ENCODE measurements at regions of chr13 and their contacts with region 1.

Region 1: DNA sequence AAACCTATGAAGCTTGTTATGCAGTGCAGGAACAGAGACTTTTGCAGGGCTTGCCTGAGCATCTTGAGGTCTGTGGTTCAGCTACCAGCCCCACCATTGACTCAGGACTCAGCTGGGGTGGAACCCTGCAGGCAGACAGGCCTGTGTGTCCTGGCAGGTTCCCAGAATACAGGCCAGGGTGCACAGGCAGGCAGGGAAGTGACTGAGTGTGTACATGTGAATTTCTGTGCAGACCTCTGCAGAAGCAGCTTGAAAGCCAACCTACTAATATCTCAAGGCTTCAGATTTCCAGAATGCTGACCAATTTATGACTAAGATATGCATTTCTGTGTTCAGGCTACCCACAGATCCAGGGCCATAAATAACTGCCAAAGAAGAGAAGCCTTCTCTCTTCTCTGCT is 254.4 kb downstream of the DLEU7 start:
- DNase-seq: peak; percentile 90
- H3K4me3 ChIP-seq: no peak overlapping the region
- H3K27ac ChIP-seq: peak overlapping the region; percentile 53
- H3K4me1 ChIP-seq: peaks cover 45% of the 10 kb centered on the region
- H3K27me3 ChIP-seq: no peaks in the 10 kb centered on the region
- CTCF ChIP-seq: no peak

Region 2: DNA sequence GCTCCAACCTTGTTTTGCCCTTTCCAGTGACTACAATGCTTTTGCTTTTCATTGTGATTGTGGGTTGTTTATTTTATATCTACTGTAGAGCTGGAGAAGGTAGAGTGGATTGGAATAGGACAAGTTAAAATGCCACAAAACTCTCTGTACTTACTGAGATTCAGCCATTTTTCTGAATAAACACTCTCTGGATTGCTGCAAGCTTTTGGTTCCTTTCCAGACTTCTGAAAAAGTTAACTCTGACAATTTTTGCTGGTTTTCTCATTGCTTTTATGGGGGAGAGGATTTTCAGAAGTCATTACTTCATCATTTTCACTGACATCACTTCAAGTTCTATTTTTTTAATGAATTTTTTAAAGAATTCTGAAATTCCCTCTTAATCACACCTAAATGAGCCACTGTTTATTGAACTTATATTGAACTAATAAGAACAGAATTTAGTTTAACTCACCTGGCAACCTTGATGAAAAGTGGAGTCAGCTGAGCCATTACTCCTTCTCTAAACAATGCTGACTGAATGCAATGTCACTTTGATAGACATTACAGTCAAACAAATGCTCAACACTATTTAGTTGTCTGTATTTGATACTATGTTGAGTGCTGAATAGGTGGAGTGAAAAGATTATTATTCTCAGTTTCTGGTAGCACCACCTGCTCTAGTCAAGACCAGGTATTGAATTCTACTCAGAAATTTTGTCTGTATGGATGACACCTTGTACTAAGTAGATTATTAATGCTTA is 49.2 kb before region 1 on chr13:
- CTCF ChIA-PET with region 1: no interaction called
- dilution Hi-C with region 1: no loop called
- in situ Hi-C with region 1: no loop called
- intact Hi-C with region 1: loop called (anchors 5 kb)
- DNase-seq: no peak
- H3K4me3 ChIP-seq: no peak overlapping the region
- H3K27ac ChIP-seq: no peak overlapping the region
- H3K4me1 ChIP-seq: peaks cover 13% of the 10 kb centered on the region
- H3K27me3 ChIP-seq: no peaks in the 10 kb centered on the region
- CTCF ChIP-seq: no peak

Region 3: DNA sequence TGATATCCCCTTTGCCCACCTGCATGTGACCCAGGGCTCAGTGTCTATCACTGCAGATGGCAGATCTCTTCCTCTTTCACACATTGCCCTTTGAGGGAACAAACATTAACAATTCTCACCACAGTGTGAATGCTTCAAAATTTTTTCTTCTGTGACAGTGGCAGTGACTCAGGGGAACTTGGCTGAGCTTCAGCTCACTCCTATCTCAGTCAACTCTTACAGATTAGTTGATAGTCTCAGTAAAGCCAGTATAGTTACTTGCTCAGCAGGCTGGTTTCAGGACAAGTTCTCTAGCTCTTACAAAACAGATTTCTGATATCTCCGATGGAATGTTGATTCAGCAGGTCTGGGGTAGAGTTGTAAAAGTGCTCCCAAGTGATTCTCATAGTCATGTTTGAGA is 87.5 kb after region 1 on chr13:
- CTCF ChIA-PET with region 1: no interaction called
- dilution Hi-C with region 1: no loop called
- in situ Hi-C with region 1: no loop called
- intact Hi-C with region 1: loop called (anchors 5 kb)
- DNase-seq: peak; percentile 50
- H3K4me3 ChIP-seq: no peak overlapping the region
- H3K27ac ChIP-seq: no peak overlapping the region
- H3K4me1 ChIP-seq: peaks cover 44% of the 10 kb centered on the region
- H3K27me3 ChIP-seq: no peaks in the 10 kb centered on the region
- CTCF ChIP-seq: no peak

Region 4: DNA sequence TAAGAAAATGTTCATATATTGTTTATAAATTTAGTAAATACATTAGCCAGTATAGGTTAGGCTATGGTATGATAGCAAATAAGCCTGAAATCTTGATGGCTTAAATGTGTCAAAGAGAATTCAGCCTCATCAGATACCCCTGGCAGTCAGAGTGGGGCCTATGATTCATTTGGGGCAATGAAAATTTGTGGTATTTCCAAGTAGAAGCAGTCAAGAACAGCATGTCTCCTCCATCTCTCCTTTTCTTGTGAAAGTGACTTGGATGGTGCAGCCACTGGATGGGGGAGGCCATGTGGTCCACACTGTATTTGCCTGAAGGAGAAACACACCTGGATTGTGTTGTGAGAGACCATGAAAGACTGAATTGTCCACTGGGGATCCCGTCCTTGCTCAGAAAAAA is 171.6 kb after region 1 on chr13:
- CTCF ChIA-PET with region 1: no interaction called
- dilution Hi-C with region 1: no loop called
- in situ Hi-C with region 1: no loop called
- intact Hi-C with region 1: loop called (anchors 2 kb)
- DNase-seq: no peak
- H3K4me3 ChIP-seq: no peak overlapping the region
- H3K27ac ChIP-seq: no peak overlapping the region
- H3K4me1 ChIP-seq: peaks cover 21% of the 10 kb centered on the region
- H3K27me3 ChIP-seq: no peaks in the 10 kb centered on the region
- CTCF ChIP-seq: no peak

Region 5: DNA sequence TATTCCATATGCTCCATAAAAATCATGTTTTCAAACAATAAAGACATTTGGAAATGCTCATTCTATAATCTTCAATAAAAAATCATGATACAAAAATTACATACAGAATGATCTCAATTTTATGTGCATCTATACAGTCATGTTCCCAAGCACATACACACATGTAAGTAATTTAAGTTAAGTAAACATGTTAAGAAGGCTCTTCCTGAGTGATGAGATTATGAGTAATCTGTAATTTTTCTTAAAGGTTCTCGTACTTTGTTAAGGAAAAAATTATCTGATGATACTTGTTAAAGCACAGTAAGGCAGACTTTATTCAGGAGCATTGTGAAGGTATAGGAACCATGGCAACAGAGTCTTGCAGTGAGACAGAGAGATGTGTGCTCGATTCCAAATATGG is 284.3 kb after region 1 on chr13:
- CTCF ChIA-PET with region 1: no interaction called
- dilution Hi-C with region 1: no loop called
- in situ Hi-C with region 1: no loop called
- intact Hi-C with region 1: no loop called
- DNase-seq: no peak
- H3K4me3 ChIP-seq: no peak overlapping the region
- H3K27ac ChIP-seq: no peak overlapping the region
- H3K4me1 ChIP-seq: no peaks in the 10 kb centered on the region
- H3K27me3 ChIP-seq: no peaks in the 10 kb centered on the region
- CTCF ChIP-seq: no peak

Measured in mammary epithelial cell (primary cell).